MCF 10A (cell line): ENCODE measurements at regions of chr10 and their contacts with region 1.

Region 1: DNA sequence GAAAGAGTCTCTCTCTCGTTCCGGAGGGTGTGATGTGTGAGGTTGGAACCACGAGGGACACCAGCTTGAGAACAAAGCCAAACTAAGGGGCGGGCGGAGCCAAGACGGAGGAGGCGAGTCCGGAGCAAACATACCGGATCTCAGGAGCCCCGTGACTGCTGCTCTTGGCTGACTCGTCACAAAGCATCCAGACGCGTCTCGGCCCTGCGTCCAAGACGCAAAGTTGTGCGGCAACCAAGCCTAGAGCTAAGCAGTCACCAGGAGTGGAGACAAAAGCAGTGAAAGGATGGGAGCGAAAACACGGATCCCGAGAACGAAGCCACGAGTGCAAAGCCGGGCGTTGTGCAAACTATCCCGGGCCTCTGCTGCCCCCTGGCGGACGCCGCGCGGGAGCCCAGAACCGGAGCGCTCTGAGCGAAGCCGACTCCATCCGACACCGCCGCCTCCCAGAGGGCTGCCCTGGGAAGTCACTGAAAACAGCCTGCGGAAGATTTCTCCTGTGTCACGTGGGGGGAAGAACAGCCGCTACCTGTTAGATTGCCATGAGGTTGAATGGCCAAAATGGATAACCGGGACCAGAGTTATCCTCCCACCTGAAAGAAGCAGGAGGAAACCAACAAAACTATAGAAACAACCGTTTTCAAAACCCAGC is 46.4 kb upstream of the TMEM72 start:
- DNase-seq: peak; percentile 76
- H3K4me3 Mint-ChIP-seq: peak overlapping the region; percentile 70
- H3K27ac Mint-ChIP-seq: no peak overlapping the region
- H3K4me1 Mint-ChIP-seq: no peaks in the 10 kb centered on the region
- H3K27me3 Mint-ChIP-seq: peaks cover 26% of the 10 kb centered on the region
- CTCF ChIP-seq: peak; percentile 88

Region 2: GRCh38 chr10:44306762-44307161 is 558.0 kb before region 1 on chr10:
- CTCF ChIA-PET with region 1: no interaction called
- POLR2A ChIA-PET with region 1: no interaction called
- intact Hi-C with region 1: loop called (anchors 2 kb)
- DNase-seq: peak; percentile 36
- H3K4me3 Mint-ChIP-seq: no peak overlapping the region
- H3K27ac Mint-ChIP-seq: no peak overlapping the region
- H3K4me1 Mint-ChIP-seq: peaks cover 6% of the 10 kb centered on the region
- H3K27me3 Mint-ChIP-seq: peaks cover 19% of the 10 kb centered on the region
- CTCF ChIP-seq: peak; percentile 15

Region 3: GRCh38 chr10:45160271-45160670 is 295.5 kb after region 1 on chr10:
- CTCF ChIA-PET with region 1: no interaction called
- POLR2A ChIA-PET with region 1: no interaction called
- intact Hi-C with region 1: no loop called
- DNase-seq: peak; percentile 66
- H3K4me3 Mint-ChIP-seq: no peak overlapping the region
- H3K27ac Mint-ChIP-seq: peak overlapping the region; percentile 87
- H3K4me1 Mint-ChIP-seq: peaks cover 26% of the 10 kb centered on the region
- H3K27me3 Mint-ChIP-seq: no peaks in the 10 kb centered on the region
- CTCF ChIP-seq: no peak